ENCODE measurements at regions of chr2 and their contacts with region 1.

Region 1: GRCh38 chr2:37196320-37197195 is at the start of gene CEBPZOS:
- DNase-seq: peak; percentile 93
- H3K4me3 Mint-ChIP-seq: peak within 1 kb of the TSS; percentile 98
- H3K27ac Mint-ChIP-seq: peak within 1 kb of the TSS; percentile 97
- H3K4me1 Mint-ChIP-seq: peaks cover 23% of the 10 kb centered on the region
- H3K27me3 Mint-ChIP-seq: no peaks in the 10 kb centered on the region
- total RNA-seq, gene CEBPZOS: 30.3 to 30.7 TPM

Region 2: DNA sequence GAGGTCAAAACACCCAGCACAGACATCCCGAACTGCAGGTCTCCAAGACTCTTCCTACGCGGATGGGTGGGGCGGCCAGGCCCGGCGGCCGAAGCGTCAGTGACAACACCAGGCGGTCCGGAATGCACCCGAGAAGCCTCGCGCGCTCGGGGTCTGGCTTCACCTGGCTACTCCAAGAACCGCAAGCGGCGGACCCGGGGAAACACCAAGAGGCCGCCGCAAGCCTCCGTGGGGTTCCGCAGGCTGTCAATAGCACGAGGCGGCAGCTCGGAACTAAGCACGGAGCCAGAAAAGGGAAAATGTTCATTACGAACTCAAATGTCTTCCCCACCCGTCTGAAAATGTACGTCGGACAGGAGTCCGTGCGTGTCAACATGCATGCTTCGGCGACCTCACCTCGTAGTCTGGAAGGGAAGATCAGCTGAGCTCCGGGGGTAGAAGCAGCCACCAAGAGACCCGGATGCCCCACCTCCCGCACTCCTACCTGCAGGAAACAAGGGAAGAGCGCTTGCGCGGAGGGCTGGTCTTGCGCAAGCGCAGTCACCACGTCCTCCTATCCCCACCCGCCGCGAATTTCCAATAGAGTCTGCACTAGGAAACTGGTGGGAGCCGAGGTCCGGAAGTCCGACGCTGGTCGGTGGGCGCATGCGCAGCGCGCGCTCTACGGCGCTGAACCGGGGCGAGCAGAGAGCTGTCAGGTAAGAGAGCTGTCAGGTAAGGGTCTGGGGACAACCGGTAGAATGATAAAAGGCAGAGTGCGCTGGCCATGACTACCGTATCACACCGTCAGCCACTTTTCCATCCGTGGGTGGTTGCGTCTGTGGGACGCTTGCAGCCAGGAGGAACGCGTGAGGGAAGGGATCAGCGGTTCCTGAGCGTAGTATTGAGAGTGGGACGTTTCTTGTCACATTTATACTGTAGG is 112.4 kb before region 1 on chr2 and contains the starts of genes GPATCH11 and HEATR5B:
- CTCF ChIA-PET with region 1: no interaction called
- intact Hi-C with region 1: loop called (anchors 1 kb)
- DNase-seq: peak; percentile 93
- H3K4me3 Mint-ChIP-seq: no peak within 1 kb of the TSS
- H3K27ac Mint-ChIP-seq: no peak within 1 kb of the TSS
- H3K4me1 Mint-ChIP-seq: peaks cover 26% of the 10 kb centered on the region
- H3K27me3 Mint-ChIP-seq: no peaks in the 10 kb centered on the region
- total RNA-seq, gene GPATCH11: 9.8 to 10.4 TPM
- total RNA-seq, gene HEATR5B: 15.5 to 15.8 TPM

Region 3: DNA sequence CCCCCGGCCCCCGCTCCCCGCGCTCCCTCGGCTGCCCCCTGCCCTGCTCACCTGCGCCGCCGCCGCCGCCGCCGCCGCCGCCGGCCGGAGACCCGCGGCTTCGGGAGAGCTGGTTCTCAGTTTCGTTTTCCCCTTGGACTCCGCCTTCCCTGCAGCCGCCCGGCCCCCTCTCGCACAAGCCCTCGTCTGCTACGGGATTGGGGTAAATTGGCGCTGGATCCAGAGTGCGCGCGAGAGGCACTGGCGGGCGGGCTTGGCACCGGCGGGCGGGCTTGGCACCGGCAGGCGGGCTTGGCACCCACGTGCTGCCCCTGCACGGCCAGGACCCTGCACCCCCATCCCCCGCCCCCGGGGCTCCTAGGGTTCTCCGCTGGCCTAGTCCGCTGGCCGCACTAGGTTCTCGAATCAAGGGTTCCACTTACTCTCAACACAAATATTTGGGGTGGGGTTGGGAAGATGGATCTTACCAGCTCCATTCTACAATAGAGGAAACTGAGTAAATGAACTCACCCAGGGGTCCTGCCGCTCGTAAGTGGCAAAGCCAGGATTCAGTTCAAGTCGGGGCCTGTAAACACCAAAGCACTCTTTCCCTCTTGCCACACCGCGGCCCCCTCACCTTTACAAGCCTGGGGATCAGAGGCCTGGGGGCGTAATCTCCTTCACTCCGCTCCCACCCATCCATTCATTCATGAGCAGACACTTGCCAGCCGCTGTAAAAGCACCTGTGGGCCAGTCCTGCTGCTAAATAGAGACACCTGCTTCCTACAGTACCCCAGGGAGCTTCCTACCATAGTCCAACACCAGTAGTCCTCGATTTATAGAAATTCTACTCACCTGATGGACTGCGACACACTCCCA is 39.5 kb before region 1 on chr2 and contains the start of gene EIF2AK2:
- CTCF ChIA-PET with region 1: interaction called, 3 read pairs
- intact Hi-C with region 1: loop called (anchors 1 kb)
- DNase-seq: peak; percentile 80
- H3K4me3 Mint-ChIP-seq: peak within 1 kb of the TSS; percentile 86
- H3K27ac Mint-ChIP-seq: peak within 1 kb of the TSS; percentile 85
- H3K4me1 Mint-ChIP-seq: peaks cover 30% of the 10 kb centered on the region
- H3K27me3 Mint-ChIP-seq: no peaks in the 10 kb centered on the region
- total RNA-seq, gene EIF2AK2: 54.5 to 55.7 TPM

Region 4: GRCh38 chr2:37180006-37180639 is 16.4 kb before region 1 on chr2:
- CTCF ChIA-PET with region 1: no interaction called
- intact Hi-C with region 1: no loop called
- DNase-seq: no peak
- H3K4me3 Mint-ChIP-seq: no peak overlapping the region
- H3K27ac Mint-ChIP-seq: no peak overlapping the region
- H3K4me1 Mint-ChIP-seq: no peaks in the 10 kb centered on the region
- H3K27me3 Mint-ChIP-seq: peaks cover 12% of the 10 kb centered on the region

Region 5: GRCh38 chr2:37215250-37215649 is 18.7 kb after region 1 on chr2:
- CTCF ChIA-PET with region 1: interaction called, 4 read pairs
- intact Hi-C with region 1: loop called (anchors 2 kb)
- DNase-seq: no peak
- H3K4me3 Mint-ChIP-seq: no peak overlapping the region
- H3K27ac Mint-ChIP-seq: peak overlapping the region; percentile 75
- H3K4me1 Mint-ChIP-seq: peaks cover 7% of the 10 kb centered on the region
- H3K27me3 Mint-ChIP-seq: no peaks in the 10 kb centered on the region

Region 6: GRCh38 chr2:37244017-37244416 is 47.5 kb after region 1 on chr2:
- CTCF ChIA-PET with region 1: interaction called, 4 read pairs
- intact Hi-C with region 1: loop called (anchors 1 kb)
- DNase-seq: no peak
- H3K4me3 Mint-ChIP-seq: no peak overlapping the region
- H3K27ac Mint-ChIP-seq: peak overlapping the region; percentile 65
- H3K4me1 Mint-ChIP-seq: peaks cover 13% of the 10 kb centered on the region
- H3K27me3 Mint-ChIP-seq: no peaks in the 10 kb centered on the region

Region 7: DNA sequence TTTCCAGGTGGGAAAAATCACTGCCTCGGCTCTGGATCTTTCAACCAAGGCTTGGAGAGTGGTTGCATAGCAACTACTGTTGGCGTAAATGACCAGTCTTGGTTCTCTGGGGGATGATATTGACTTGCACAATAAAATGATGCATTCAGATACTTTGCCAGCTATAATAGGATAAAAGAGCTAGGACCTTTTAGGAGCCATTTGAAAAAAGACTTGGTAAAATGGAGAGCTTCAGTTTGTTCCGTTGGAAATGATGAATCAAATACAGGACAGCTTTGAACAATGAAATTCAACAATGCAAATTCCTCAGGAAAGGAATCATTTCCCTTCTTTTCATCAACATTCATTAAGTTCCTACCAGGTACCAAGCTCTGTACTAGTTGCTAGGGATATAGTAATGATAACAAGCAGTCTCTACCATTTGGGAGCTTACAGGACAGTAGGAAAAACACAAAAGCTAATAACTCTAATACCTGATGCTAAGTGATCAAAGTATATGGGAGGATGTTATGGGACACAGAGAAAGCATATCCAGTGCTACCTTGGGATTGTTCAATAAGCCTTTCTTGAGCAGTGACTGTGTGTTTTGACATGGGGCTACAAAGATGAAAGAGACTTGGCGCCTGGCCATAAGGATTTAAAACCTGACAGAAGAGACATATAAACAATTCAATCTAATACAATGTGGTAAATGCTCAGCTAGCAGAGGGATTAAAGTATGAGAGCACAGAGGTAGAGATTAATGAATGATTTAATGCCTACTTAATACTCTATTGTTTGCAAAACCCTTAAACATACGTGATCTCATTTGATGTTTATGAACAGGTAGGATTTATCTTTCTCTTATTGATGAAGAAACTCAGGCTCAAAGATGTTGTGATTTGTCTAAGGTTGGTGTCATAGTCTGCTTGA is 258.5 kb after region 1 on chr2:
- CTCF ChIA-PET with region 1: no interaction called
- intact Hi-C with region 1: no loop called
- DNase-seq: no peak
- H3K4me3 Mint-ChIP-seq: no peak overlapping the region
- H3K27ac Mint-ChIP-seq: no peak overlapping the region
- H3K4me1 Mint-ChIP-seq: peaks cover 46% of the 10 kb centered on the region
- H3K27me3 Mint-ChIP-seq: no peaks in the 10 kb centered on the region